PC-3 (cell line): ENCODE measurements at regions of chr4 and their contacts with region 1.

Region 1: DNA sequence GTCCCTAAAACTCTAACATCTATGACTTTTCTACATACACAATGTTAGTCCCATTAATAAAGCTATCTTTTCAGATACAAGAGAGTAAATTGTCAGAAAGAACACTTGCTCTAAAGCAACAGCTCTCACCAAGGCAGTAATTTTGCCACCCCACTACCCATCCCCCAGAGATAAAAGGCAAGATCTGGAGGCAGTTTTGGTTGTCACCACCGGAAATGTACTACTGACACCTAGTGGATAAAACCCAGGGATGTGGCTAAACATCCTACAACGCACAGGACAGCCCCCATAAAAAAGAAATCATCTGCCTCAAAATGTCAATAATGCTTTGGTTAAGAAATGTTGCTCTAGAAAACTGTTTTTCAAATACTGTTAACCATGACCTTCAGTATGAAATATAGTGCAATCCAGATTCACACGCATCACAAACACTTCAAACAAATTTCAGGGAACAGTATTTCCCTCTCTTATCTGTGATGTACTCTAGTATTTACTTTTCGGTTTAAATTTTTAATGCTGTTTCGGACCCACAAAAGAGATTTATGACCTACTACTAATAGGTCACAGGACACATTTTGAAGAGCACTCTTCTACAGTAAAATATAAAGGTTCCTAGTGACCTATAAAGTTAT is 5.1 kb downstream of the FBXL5 start:
- DNase-seq: peak; percentile 62
- ATAC-seq: peak; percentile 20
- H3K4me3 ChIP-seq: no peak overlapping the region
- H3K27ac ChIP-seq: no peak overlapping the region
- H3K4me1 ChIP-seq: peaks cover 28% of the 10 kb centered on the region
- H3K27me3 ChIP-seq: no peaks in the 10 kb centered on the region
- CTCF ChIP-seq: peak; percentile 77

Region 2: GRCh38 chr4:15479089-15479912 is 170.7 kb before region 1 on chr4:
- CTCF ChIA-PET with region 1: interaction called, 4 read pairs
- POLR2A ChIA-PET with region 1: no interaction called
- intact Hi-C with region 1: loop called (anchors 2 kb)
- DNase-seq: peak; percentile 81
- ATAC-seq: peak; percentile 83
- H3K4me3 ChIP-seq: peak overlapping the region; percentile 75
- H3K27ac ChIP-seq: peak overlapping the region; percentile 76
- H3K4me1 ChIP-seq: peaks cover 8% of the 10 kb centered on the region; the same call in 1 of the 2 replicates
- H3K27me3 ChIP-seq: no peaks in the 10 kb centered on the region
- CTCF ChIP-seq: peak; percentile 75

Region 3: DNA sequence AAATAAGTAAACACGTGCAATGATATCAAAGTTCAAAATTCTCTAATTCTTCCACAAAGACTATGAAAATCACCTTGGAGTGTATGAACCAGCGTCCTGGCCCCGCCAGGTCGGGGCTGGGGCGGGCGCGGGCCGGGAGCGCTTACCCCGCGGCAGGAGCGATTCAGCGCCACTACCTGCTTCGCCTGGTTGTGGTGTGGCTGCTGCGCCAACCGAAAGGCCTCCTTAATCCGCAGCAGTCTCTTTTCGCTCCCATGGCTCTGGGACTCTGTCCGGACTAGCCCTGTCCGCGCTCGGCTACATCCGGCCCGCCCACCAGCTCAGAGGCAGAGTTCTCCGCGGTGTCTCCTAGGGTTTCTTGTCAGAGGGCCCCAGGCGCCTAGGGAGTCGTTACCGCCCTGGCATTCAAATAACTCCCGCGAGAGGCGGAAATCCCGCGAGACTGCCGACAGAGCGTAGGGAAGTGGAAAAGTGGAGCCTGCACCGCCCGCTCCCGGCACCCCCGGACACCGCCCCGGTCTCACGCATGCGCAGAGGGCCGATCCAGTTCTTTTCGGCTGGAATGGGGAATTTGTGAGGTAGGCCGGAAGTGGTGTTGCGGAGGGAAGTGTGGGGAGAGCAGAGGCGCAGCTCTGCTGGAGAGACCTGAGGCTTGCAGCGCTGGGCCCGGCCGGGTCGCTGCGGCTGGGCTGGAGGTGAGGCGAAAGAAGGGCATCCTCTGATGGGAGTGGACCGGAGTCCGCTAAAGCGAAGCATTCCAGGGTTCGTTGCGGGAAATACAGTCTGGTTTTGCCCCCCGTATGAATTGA is 31.4 kb after region 1 on chr4 and contains the start of gene FAM200B:
- CTCF ChIA-PET with region 1: no interaction called
- POLR2A ChIA-PET with region 1: interaction called, 3 read pairs
- intact Hi-C with region 1: loop called (anchors 1 kb)
- DNase-seq: peak; percentile 99
- ATAC-seq: peak; percentile 92
- H3K4me3 ChIP-seq: peak within 1 kb of the TSS; percentile 98
- H3K27ac ChIP-seq: peak within 1 kb of the TSS; percentile 85
- H3K4me1 ChIP-seq: peaks cover 53% of the 10 kb centered on the region
- H3K27me3 ChIP-seq: no peaks in the 10 kb centered on the region
- CTCF ChIP-seq: no peak
- total RNA-seq, gene FAM200B: 20.1 and 20.7 TPM in 2 replicates

Region 4: DNA sequence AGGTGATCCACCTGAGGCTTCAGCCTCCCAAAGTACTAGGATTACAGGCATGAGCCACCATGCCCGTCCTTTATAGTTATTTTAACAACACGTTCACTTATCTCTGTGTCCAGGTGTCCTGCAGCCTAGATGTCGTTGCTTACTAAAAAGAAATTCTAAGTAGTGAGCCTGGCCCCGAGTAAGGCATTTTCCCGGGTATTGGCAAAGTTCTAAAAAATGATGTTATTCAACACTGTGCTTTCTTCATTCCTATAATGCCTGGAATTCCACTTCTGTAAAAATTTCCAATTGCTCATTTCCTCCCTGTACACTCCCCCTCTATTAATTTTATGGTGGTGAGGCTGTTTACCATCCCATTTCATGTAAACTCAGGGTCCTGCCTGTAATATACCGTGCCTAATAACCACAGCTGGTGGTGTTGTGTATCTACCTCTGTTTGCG is 67.0 kb after region 1 on chr4:
- CTCF ChIA-PET with region 1: no interaction called
- POLR2A ChIA-PET with region 1: interaction called, 23 read pairs
- intact Hi-C with region 1: no loop called
- DNase-seq: peak; percentile 30
- ATAC-seq: peak; percentile 87
- H3K4me3 ChIP-seq: no peak overlapping the region
- H3K27ac ChIP-seq: no peak overlapping the region
- H3K4me1 ChIP-seq: peaks cover 9% of the 10 kb centered on the region
- H3K27me3 ChIP-seq: no peaks in the 10 kb centered on the region
- CTCF ChIP-seq: no peak